ENCODE measurements at regions of chr19 and their contacts with region 1.

Region 1: GRCh38 chr19:6125571-6125989 is 9.9 kb upstream of the ACSBG2 start:
- DNase-seq: peak; percentile 88
- ATAC-seq: peak; percentile 88
- H3K4me3 ChIP-seq: no peak overlapping the region
- H3K27ac ChIP-seq: no peak overlapping the region
- H3K4me1 ChIP-seq: peaks cover 0 to 5% of the 10 kb centered on the region in 2 experiments; a peak in 1 of 4 replicates
- H3K27me3 ChIP-seq: peaks cover under 1% of the 10 kb centered on the region; the same call in 1 of the 2 replicates
- CTCF ChIP-seq: peak; percentile 91 to 97 (median 96)
- POLR2A ChIP-seq: no peak
- RAD21 ChIP-seq: peak; percentile 97

Region 2: DNA sequence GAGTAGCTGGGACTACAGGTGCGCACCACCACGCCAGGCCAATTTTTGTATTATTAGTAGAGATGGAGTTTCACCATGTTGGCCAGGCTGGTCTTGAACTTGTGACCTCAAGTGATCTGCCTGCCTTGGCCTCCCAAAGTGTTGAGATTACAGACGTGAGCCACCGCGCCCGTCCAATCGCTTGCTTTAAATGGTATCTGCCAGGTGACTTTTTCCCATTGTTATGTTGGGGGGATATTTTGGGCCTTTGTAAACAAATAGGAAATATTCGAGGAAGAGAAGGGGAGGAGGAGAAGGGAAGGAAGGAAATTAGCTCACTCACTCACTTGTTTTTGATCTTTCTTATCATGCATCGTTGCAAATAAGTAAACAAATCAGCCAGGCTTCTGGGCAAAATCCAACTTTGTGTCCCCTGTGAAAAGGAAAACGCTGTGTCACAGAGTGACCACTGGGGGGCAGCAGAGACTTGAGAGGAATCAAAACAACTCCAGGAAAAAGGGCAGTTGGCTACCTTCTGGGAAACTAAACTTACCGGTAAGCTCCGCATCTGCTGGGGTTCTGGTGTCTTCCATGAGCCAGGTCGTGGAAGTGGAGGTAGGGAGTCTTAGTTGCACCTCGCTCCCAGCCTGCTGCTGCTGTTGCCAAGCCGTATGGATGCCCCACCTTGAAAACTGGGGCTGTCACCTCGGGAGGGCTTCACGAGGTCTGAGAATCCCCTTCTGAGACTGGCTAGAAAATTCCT is 138.3 kb before region 1 on chr19:
- CTCF ChIA-PET with region 1: interaction called, 9 read pairs
- POLR2A ChIA-PET with region 1: no interaction called
- RAD21 ChIA-PET with region 1: interaction called in 1 of 2 experiments, 3 read pairs
- intact Hi-C with region 1: loop called (anchors 1 kb)
- DNase-seq: peak; percentile 60
- ATAC-seq: peak; percentile 61
- H3K4me3 ChIP-seq: no peak overlapping the region
- H3K27ac ChIP-seq: no peak overlapping the region
- H3K4me1 ChIP-seq: peaks cover 0 to 19% of the 10 kb centered on the region in 2 experiments; a peak in 2 of 4 replicates
- H3K27me3 ChIP-seq: no peaks in the 10 kb centered on the region
- CTCF ChIP-seq: peak; percentile 88 to 94 (median 93); a peak in 5 of 6 replicates
- POLR2A ChIP-seq: no peak
- RAD21 ChIP-seq: peak; percentile 85

Region 3: DNA sequence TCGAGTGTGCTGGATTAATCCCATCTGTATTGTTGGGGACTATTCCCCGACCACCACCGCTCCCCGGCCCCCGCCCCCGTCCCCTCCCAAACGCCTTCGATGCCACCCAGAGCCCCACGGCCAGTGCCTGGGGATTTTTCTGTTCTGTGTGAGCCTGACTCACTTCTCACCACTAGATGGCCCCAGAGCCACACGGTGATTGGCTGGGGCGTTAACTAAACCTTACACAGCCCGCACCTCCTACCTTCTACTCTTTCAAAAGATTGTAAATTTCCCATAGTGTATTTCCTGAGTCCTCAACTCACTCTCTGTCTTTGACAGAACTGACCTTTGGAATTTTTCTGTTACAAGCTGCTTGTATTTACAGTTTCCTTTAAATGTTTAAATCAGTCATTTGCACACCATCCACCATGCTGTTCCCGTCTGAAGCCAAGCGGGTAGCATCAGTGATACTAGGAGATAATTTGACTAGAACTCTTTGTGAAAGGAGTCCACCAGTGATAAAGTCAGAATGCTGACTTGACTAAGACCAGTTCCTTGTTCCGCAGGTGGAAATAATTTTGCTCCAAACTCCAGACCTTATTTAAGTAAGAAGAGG is 76.7 kb before region 1 on chr19:
- CTCF ChIA-PET with region 1: interaction called, 94 read pairs
- POLR2A ChIA-PET with region 1: interaction called, 13 read pairs
- RAD21 ChIA-PET with region 1: interaction called, 13 to 15 read pairs
- intact Hi-C with region 1: loop called (anchors 1 kb)
- DNase-seq: peak; percentile 59
- ATAC-seq: peak; percentile 99
- H3K4me3 ChIP-seq: no peak overlapping the region
- H3K27ac ChIP-seq: no peak overlapping the region
- H3K4me1 ChIP-seq: peaks cover 3 to 11% of the 10 kb centered on the region in 2 experiments; a peak in 3 of 4 replicates
- H3K27me3 ChIP-seq: no peaks in the 10 kb centered on the region
- CTCF ChIP-seq: peak; percentile 85 to 90 (median 87)
- POLR2A ChIP-seq: no peak
- RAD21 ChIP-seq: peak; percentile 94

Region 4: GRCh38 chr19:6076675-6077463 is 48.7 kb before region 1 on chr19:
- CTCF ChIA-PET with region 1: no interaction called
- POLR2A ChIA-PET with region 1: no interaction called
- RAD21 ChIA-PET with region 1: no interaction called
- intact Hi-C with region 1: no loop called
- DNase-seq: no peak
- ATAC-seq: no peak
- H3K4me3 ChIP-seq: no peak overlapping the region
- H3K27ac ChIP-seq: no peak overlapping the region
- H3K4me1 ChIP-seq: peaks cover 0 to 12% of the 10 kb centered on the region in 2 experiments; a peak in 1 of 4 replicates
- H3K27me3 ChIP-seq: no peaks in the 10 kb centered on the region
- CTCF ChIP-seq: no peak
- POLR2A ChIP-seq: no peak
- RAD21 ChIP-seq: no peak

Region 5: DNA sequence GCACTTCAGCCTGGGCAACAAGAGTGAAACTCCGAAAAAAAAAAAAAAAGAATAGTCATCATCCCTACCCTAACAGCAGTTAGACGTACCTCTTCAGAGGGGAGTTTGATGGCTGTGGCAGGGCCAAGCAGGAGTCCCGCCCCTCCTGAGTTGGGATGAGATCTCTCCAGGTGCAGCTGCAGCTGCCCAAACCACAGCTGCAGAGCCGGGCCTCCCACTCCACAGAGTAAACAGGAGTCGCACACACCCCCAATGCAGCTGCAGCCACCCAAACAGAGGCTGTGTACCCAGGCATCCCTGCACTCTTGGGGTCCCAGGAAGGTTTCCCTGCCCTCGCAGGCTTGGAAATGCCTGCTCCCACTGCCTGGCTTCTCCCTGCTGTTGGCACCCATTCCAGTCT is 171.6 kb after region 1 on chr19:
- CTCF ChIA-PET with region 1: interaction called, 5 read pairs
- POLR2A ChIA-PET with region 1: no interaction called
- RAD21 ChIA-PET with region 1: no interaction called
- intact Hi-C with region 1: loop called (anchors 5 kb)
- DNase-seq: no peak
- ATAC-seq: no peak
- H3K4me3 ChIP-seq: no peak overlapping the region
- H3K27ac ChIP-seq: no peak overlapping the region
- H3K4me1 ChIP-seq: no peaks in the 10 kb centered on the region
- H3K27me3 ChIP-seq: no peaks in the 10 kb centered on the region
- CTCF ChIP-seq: no peak
- POLR2A ChIP-seq: no peak
- RAD21 ChIP-seq: no peak

Region 6: GRCh38 chr19:6354098-6354674 is 228.6 kb after region 1 on chr19:
- CTCF ChIA-PET with region 1: interaction called, 4 read pairs
- POLR2A ChIA-PET with region 1: no interaction called
- RAD21 ChIA-PET with region 1: no interaction called
- intact Hi-C with region 1: loop called (anchors 1 kb)
- DNase-seq: no peak
- ATAC-seq: peak; percentile 61
- H3K4me3 ChIP-seq: no peak overlapping the region
- H3K27ac ChIP-seq: no peak overlapping the region
- H3K4me1 ChIP-seq: peaks cover 0 to 8% of the 10 kb centered on the region in 2 experiments; a peak in 3 of 4 replicates
- H3K27me3 ChIP-seq: 0 out of 2 replicates have a peak, but pooled peaks cover under 1% of the 10 kb centered on the region
- CTCF ChIP-seq: peak; percentile 41 to 58 (median 56); a peak in 5 of 6 replicates
- POLR2A ChIP-seq: no peak
- RAD21 ChIP-seq: peak; percentile 45

Region 7: DNA sequence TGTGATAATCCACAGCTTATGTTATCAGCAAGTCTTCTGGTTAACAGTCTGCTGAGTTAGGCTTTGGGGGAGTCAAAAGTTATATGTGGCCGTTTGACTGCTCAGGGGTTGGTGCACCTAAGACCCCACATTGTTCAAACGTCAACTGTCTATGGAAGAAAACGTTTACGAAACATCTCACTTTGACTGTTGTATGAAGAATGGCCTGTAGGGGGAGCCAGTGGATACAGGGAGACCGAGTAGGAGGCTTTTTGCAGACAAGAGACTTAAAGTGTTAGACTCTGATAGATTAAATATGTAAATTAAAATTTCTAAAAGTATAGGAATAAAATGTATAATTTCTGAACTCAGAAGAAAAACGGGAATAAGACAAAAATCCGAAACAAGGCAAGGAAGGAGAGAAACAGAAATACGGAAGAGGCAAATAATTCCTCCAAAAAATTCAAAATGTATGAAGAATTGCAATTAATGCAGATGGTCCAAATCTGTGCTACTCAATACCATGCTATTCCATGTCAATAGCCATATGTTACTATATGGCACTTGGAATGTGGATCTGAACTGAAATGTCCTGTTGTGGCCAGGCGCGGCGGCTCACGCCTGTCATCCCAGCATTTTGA is 506.5 kb after region 1 on chr19:
- CTCF ChIA-PET with region 1: no interaction called
- POLR2A ChIA-PET with region 1: no interaction called
- RAD21 ChIA-PET with region 1: no interaction called
- intact Hi-C with region 1: loop called (anchors 2 kb)
- DNase-seq: peak; percentile 77
- ATAC-seq: peak; percentile 71
- H3K4me3 ChIP-seq: no peak overlapping the region
- H3K27ac ChIP-seq: no peak overlapping the region
- H3K4me1 ChIP-seq: peaks cover 3 to 14% of the 10 kb centered on the region in 2 experiments; a peak in 3 of 4 replicates
- H3K27me3 ChIP-seq: no peaks in the 10 kb centered on the region
- CTCF ChIP-seq: peak; percentile 70 to 83 (median 76)
- POLR2A ChIP-seq: no peak
- RAD21 ChIP-seq: peak; percentile 80